Caco-2 (cell line): ENCODE measurements at regions of chr22 and their contacts with region 1.

Region 1: DNA sequence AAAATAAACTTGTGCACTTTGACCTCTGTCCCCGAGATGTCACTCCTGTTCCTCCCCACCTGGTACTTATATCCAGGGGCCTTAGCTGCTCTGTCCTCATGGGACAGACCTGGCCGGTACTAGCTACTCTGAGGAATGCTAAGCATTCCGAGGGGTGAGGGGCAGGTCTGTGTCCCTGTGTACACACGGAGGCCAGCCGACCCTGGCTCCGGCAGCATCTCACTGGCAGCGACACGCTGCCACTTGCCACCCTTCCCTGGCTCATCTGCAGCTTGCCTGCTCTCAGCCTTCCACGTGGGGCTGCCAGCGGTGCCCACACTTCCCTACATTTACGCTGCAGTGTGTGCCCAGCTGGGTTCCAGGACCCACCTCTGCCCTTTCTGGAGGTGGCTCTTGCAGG is 21.6 kb upstream of the TEF start:
- DNase-seq: peak; percentile 89 to 94
- H3K4me3 ChIP-seq: no peak overlapping the region
- H3K4me3 Mint-ChIP-seq: peak overlapping the region; percentile 39
- H3K27ac Mint-ChIP-seq: peak overlapping the region; percentile 97
- H3K4me1 ChIP-seq: peaks cover 53% of the 10 kb centered on the region
- H3K4me1 Mint-ChIP-seq: peaks cover 23% of the 10 kb centered on the region
- H3K27me3 ChIP-seq: no peaks in the 10 kb centered on the region
- H3K27me3 Mint-ChIP-seq: no peaks in the 10 kb centered on the region
- CTCF ChIP-seq: no peak

Region 2: DNA sequence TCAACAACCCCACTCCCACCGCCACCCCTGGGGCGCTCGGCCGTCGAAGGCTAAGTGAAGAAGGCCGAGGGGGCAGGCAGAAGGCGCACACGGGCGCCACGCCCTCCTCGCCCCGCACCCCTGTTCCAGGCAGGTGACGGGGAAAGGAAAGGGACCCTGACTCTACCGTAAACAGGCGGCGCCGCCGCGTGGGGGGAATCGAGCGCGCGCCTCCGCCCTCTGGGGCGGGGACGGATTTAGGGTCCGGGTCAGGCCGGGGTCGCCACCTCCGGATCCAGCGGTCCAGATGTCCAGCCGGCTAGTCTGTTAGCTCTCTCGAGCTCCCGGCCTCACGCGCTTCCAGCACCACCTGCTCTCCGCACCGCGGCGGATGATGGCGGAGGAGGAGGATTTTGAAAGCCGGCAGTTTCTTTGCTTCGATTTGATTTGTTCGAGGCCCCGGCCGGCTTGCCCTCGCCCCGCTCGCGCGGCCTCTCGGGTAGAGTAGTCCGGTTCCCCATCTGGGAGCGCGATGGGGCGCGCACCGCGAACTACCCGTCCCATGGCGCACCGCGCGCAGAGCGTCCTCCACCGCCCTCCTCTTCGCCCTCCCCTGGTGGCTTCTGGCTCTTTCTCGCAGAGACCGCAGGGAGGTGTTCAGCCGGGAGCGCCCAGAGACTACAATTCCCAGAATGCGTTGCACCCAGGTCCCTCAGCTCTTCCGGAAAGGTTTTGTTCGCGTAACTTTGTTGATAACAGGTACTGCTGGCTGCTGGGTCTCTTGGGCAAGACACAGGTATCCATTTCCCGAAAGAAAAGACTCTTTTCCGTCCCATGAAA is 74.1 kb before region 1 on chr22 and contains the start of gene RANGAP1:
- CTCF ChIA-PET with region 1: no interaction called
- POLR2A ChIA-PET with region 1: interaction called, 4 read pairs
- intact Hi-C with region 1: loop called (anchors 5 kb)
- DNase-seq: peak; percentile 98 to 99
- H3K4me3 ChIP-seq: peak within 1 kb of the TSS; percentile 78
- H3K4me3 Mint-ChIP-seq: peak within 1 kb of the TSS; percentile 88
- H3K27ac Mint-ChIP-seq: peak within 1 kb of the TSS; percentile 92
- H3K4me1 ChIP-seq: peaks cover 39% of the 10 kb centered on the region
- H3K4me1 Mint-ChIP-seq: peaks cover 32% of the 10 kb centered on the region
- H3K27me3 ChIP-seq: no peaks in the 10 kb centered on the region
- H3K27me3 Mint-ChIP-seq: no peaks in the 10 kb centered on the region
- CTCF ChIP-seq: peak in 1 of 2 experiments; percentile 23
- total RNA-seq, gene RANGAP1: 106 and 112 TPM in 2 replicates

Region 3: GRCh38 chr22:41411021-41411851 is 51.1 kb after region 1 on chr22:
- CTCF ChIA-PET with region 1: no interaction called
- POLR2A ChIA-PET with region 1: interaction called, 14 read pairs
- intact Hi-C with region 1: no loop called
- DNase-seq: no peak
- H3K4me3 ChIP-seq: no peak overlapping the region
- H3K4me3 Mint-ChIP-seq: no peak overlapping the region
- H3K27ac Mint-ChIP-seq: peak overlapping the region; percentile 15
- H3K4me1 ChIP-seq: peaks cover 12% of the 10 kb centered on the region
- H3K4me1 Mint-ChIP-seq: peaks cover 16% of the 10 kb centered on the region
- H3K27me3 ChIP-seq: no peaks in the 10 kb centered on the region
- H3K27me3 Mint-ChIP-seq: no peaks in the 10 kb centered on the region
- CTCF ChIP-seq: no peak

Region 4: DNA sequence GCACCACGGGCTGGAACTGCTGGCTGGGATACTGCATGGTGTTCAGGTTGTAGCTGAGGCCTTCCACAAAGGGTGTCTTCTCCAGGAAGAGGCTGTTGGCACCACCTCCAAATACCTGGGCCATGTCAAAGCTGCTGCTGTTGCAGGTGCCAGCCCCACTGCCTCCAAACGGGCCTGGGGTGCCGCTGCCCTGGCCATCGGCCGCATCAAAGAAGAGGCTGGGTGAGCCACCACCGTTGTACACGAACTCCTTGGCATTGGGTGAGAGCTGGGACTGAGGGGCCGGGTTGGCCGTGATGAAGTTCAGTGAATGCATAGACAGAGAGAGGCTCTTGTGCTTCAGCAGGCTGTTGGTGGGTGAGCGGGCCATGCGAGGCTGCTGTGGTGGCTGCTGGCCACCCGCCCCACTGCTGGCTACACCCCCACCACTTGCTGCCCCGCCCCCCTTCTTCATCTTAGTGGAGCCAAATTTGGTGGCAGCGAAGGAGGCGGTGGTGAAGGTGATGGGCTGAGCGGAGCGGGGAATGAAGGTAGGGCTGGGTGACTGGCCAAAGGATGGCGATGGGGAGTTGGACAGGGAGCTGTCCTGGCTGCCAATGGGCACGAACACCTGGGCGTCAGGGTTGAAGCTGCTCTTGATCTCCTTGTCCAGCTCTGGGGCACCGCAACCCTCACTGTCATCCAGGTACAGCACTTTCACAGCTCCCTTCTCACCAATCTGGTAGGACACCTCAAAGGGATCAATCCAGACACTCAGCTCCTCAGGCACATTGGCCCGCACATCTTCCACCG is 76.4 kb after region 1 on chr22:
- CTCF ChIA-PET with region 1: no interaction called
- POLR2A ChIA-PET with region 1: no interaction called
- intact Hi-C with region 1: no loop called
- DNase-seq: no peak
- H3K4me3 ChIP-seq: no peak overlapping the region
- H3K4me3 Mint-ChIP-seq: no peak overlapping the region
- H3K27ac Mint-ChIP-seq: no peak overlapping the region
- H3K4me1 ChIP-seq: no peaks in the 10 kb centered on the region
- H3K4me1 Mint-ChIP-seq: no peaks in the 10 kb centered on the region
- H3K27me3 ChIP-seq: no peaks in the 10 kb centered on the region
- H3K27me3 Mint-ChIP-seq: no peaks in the 10 kb centered on the region
- CTCF ChIP-seq: no peak

Region 5: DNA sequence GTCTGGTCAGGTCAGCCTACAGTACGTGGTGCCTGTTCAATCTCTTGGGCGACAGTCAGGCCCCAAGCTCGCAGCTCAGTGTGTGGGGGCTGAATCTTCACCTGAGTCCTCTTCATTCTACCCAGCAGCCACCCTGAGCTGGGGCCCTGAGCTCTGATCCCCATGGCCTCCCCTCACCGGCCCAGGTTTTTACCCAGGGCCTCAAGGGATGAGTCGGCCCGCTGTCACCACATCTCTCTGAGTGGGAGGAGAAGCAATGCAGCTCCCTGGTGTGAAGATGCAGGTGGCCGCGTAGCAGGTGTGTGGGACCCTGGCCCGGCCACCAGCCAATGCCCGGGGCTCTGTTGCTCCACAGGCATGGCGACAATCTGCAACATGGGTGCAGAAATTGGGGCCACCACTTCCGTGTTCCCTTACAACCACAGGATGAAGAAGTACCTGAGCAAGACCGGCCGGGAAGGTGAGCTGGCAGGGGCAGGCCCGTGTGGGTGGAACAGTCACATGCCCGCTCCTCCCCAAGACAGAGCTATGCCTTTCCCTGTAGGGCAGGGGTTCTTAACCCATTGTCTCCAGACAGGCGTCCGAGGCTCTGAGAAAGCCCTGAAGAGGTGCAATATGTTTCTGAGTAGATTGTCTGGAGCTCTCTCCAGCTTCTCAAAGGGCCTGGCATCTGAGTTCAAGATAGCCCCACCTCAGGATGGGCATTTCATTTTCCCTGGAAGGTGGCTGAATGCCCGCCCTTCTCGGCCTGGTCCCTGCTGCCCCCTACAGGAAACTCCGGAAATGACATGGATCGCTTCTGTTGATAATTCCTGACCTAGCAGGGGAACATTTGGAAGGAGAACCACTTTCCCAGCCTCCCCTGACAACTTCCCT is 157.3 kb after region 1 on chr22:
- CTCF ChIA-PET with region 1: no interaction called
- POLR2A ChIA-PET with region 1: no interaction called
- intact Hi-C with region 1: loop called (anchors 1 kb)
- DNase-seq: peak; percentile 57 to 79
- H3K4me3 ChIP-seq: no peak overlapping the region
- H3K4me3 Mint-ChIP-seq: no peak overlapping the region
- H3K27ac Mint-ChIP-seq: no peak overlapping the region
- H3K4me1 ChIP-seq: no peaks in the 10 kb centered on the region
- H3K4me1 Mint-ChIP-seq: peaks cover 7% of the 10 kb centered on the region
- H3K27me3 ChIP-seq: no peaks in the 10 kb centered on the region
- H3K27me3 Mint-ChIP-seq: no peaks in the 10 kb centered on the region
- CTCF ChIP-seq: peak; percentile 76 to 78

Region 6: DNA sequence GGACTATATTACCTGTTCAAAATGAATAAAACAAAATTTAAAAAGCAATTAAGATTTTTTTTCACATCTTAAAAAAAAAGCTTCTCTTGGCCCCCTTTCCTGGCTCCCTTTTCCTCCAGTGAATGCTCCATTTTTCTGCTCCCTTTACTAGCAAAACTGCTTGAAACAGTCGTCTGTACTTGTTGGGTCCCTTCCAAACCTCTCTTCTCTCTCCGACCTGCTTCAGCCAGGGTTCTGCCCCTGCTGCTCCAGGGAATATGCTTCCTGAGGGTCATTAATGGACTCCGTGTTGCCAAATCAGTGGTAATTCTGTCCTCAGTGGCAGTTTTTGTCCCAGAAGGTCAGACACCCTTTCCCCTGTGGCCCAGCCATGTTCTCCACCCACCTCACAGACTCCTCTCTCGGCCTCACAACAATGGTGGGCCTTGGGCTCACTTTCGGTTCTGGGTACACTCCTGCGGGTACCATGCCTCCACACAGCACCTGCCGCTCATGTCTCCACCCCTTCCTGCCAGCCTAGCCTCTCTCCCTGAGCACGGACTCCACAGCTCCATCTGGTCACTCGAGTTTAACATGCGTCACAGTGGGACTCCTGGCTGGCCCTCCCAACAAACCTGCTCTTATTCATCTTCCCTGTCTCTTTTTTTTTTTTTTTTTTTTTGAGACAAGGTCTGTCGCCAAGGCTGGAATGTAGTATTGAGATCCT is 191.9 kb after region 1 on chr22:
- CTCF ChIA-PET with region 1: no interaction called
- POLR2A ChIA-PET with region 1: no interaction called
- intact Hi-C with region 1: no loop called
- DNase-seq: no peak
- H3K4me3 ChIP-seq: no peak overlapping the region
- H3K4me3 Mint-ChIP-seq: no peak overlapping the region
- H3K27ac Mint-ChIP-seq: no peak overlapping the region
- H3K4me1 ChIP-seq: peaks cover 15% of the 10 kb centered on the region
- H3K4me1 Mint-ChIP-seq: peaks cover 15% of the 10 kb centered on the region
- H3K27me3 ChIP-seq: no peaks in the 10 kb centered on the region
- H3K27me3 Mint-ChIP-seq: no peaks in the 10 kb centered on the region
- CTCF ChIP-seq: no peak